Activated CD4-positive, alpha-beta T cell treated with anti-CD3 and anti-CD28 coated beads, Interleukin-2, amount 10 ng/mL, durations not matched to agents 24 days and 14 days (primary cell): ENCODE measurements at regions of chr19 and their contacts with region 1.

Region 1: DNA sequence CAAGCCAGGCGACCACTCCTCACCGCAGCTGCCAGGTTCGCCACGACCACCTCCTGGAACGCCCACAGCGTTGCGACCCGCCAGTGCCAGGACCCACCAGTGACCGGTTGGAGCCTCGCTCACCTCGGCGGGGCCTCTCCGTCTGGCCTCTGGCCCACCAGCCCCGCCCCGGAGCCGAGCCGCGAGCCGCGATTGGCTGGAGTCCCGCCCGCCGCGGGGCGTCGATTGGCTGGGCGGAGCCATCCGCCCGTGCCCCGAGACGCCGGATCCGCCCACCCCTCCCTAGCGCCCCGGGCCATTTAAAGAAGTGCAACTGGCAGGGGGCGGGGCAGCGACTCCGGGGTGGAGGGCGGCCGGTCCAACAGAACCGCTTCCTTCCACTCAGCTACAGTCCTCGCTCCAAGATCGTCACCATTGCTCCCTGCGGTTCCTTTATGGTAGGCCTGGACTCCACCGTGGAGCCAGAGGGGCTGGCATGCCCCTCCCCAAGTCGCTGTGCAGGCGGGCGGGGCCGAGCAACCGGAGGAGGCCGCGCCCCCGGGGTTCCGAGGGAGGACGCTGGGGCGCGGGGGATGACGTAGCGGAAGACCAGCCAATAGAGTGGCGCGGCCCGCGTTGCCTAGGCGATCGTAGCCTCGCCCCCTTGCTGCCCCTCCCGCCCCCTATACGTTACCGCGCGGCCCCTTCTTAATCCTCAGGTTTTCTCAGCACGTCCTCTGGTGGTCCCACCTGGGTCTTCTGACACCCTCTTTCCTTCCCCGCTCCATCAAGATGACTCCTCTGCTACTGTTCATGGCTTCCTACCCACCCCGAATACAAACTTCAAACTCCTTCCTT is at the start of gene SERTAD3:
- DNase-seq: peak; percentile 99
- H3K4me3 Mint-ChIP-seq: peak within 1 kb of the TSS; percentile 98
- H3K27ac Mint-ChIP-seq: peak within 1 kb of the TSS; percentile 96
- H3K4me1 Mint-ChIP-seq: peaks cover 14% of the 10 kb centered on the region
- H3K27me3 Mint-ChIP-seq: no peaks in the 10 kb centered on the region
- total RNA-seq, gene SERTAD3: 10.8 and 12.5 TPM in 2 replicates

Region 2: GRCh38 chr19:40348125-40348913 is 96.1 kb before region 1 on chr19 and contains the starts of genes C19orf47 and PLD3:
- intact Hi-C with region 1: loop called (anchors 2 kb)
- DNase-seq: peak; percentile 100
- H3K4me3 Mint-ChIP-seq: peak within 1 kb of the TSS; percentile 88
- H3K27ac Mint-ChIP-seq: peak within 1 kb of the TSS; percentile 87
- H3K4me1 Mint-ChIP-seq: peaks cover 23% of the 10 kb centered on the region
- H3K27me3 Mint-ChIP-seq: peaks cover 2% of the 10 kb centered on the region
- total RNA-seq, gene C19orf47: 24.4 and 28.9 TPM in 2 replicates
- total RNA-seq, gene PLD3: 49.4 and 52.2 TPM in 2 replicates

Region 3: GRCh38 chr19:40433391-40434216 is 10.8 kb before region 1 on chr19:
- intact Hi-C with region 1: loop called (anchors 1 kb)
- DNase-seq: peak; percentile 89
- H3K4me3 Mint-ChIP-seq: peak overlapping the region; percentile 89
- H3K27ac Mint-ChIP-seq: peak overlapping the region; percentile 99
- H3K4me1 Mint-ChIP-seq: peaks cover 9% of the 10 kb centered on the region
- H3K27me3 Mint-ChIP-seq: no peaks in the 10 kb centered on the region

Region 4: GRCh38 chr19:40497214-40497613 is 52.8 kb after region 1 on chr19:
- intact Hi-C with region 1: no loop called
- DNase-seq: no peak
- H3K4me3 Mint-ChIP-seq: no peak overlapping the region
- H3K27ac Mint-ChIP-seq: no peak overlapping the region
- H3K4me1 Mint-ChIP-seq: no peaks in the 10 kb centered on the region
- H3K27me3 Mint-ChIP-seq: peaks cover 9% of the 10 kb centered on the region

Region 5: DNA sequence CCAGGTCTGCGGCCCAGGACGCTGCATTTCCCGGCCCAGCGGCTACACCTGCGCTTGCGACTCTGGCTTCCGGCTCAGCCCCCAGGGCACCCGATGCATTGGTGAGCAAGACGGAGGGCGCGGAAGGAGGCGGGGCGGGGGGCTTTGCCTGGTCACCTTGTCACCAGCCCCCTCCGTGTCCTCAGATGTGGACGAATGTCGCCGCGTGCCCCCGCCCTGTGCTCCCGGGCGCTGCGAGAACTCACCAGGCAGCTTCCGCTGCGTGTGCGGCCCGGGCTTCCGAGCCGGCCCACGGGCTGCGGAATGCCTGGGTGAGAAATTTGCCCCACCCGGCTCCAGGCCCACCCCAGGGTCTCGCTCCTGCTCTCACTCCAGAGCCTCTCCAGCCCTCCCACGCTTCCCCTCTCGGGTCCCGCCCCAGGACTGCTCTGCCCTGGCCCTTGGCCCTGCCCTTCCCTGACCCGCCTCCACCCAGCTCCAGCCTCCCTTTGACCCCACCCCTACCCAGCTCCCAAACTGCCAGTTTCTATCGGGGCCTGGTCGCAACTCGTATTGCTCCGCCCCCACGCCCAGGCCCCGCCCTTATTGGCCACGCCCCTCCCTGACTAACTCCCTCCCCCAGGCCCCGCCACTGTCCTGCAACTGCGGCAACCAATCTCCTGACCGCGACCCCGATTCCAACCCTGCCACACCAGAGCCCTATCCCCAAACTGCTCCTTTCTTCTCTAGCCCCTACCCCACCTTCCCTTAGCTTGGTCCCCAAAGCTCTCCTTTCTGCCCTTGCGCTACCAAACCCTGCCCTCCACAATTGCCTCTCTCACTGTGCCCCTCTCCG is 165.4 kb after region 1 on chr19:
- intact Hi-C with region 1: loop called (anchors 1 kb)
- DNase-seq: peak; percentile 97
- H3K4me3 Mint-ChIP-seq: peak overlapping the region; percentile 95
- H3K27ac Mint-ChIP-seq: peak overlapping the region; percentile 97
- H3K4me1 Mint-ChIP-seq: peaks cover 43% of the 10 kb centered on the region
- H3K27me3 Mint-ChIP-seq: no peaks in the 10 kb centered on the region

Region 6: DNA sequence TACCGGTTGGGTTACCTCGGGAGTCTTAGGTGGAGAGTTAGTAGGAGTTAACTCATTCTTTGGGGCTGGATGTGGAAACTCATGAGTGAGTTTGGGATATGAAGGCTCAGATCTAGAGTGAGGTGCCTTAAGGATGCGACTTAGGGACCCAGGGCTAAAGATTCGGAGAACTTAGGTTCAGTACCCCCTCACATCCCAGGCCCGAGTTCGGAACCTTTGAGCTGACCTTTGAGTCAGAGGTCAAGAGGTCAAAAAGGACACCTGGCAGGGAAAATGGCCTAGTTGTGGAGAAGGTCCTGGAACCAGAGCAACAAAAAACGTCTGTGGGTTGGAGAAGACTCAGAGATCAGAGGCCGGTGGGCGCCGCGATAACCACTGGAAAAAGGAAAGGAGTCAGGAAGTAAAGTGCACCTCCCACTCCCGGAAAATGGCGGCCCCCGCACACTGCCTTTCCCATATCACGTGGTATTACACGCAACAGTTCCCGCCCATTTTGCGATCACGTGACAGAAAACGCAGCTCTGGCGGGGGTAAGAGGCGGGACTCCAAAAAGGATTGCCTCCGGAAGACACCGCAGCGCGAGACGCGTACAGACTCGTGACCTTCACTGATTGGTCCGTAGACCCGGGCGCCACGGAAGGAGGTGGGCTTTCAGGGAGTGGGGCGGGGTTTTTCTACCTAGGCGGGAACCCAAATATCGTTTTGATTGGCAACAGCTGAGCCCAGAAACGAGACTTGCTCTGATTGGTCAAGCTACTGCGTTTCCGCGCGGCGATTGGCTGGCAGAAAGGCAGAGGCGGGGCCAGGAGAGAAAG is 305.9 kb after region 1 on chr19 and contains the start of gene ACTMAP:
- intact Hi-C with region 1: loop called (anchors 5 kb)
- DNase-seq: peak; percentile 100
- H3K4me3 Mint-ChIP-seq: peak within 1 kb of the TSS; percentile 92
- H3K27ac Mint-ChIP-seq: peak within 1 kb of the TSS; percentile 100
- H3K4me1 Mint-ChIP-seq: peaks cover 37% of the 10 kb centered on the region
- H3K27me3 Mint-ChIP-seq: no peaks in the 10 kb centered on the region
- total RNA-seq, gene ACTMAP: 8.6 and 9.4 TPM in 2 replicates